K562 (cell line): ENCODE measurements at regions of chr3 and their contacts with region 1.

Region 1: DNA sequence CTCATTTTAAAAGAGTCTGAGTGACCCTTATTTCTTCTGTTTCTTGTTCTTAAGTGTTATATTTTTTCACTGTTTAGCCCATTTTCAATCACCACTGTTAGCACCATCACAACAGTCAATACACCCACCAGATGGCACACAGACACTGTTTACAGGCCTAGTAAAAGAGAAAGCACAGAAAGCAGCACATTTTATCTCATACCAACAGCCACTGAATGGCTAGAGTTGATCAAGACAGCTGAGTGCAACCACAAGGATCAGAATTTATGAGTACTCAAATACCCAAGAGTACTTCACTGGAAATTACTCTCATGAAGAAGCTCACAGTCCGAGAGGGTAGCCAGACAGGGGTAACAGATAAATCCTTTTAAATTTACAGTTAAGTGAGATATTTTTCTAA is 127.0 kb downstream of the TFDP2 start:
- DNase-seq: peak; percentile 35 to 89 (median 56)
- ATAC-seq: peak; percentile 82
- H3K4me3 ChIP-seq: no peak overlapping the region
- H3K27ac ChIP-seq: peak overlapping the region; percentile 45; the same call in 2 of the 3 replicates
- H3K4me1 ChIP-seq: peaks cover 22 to 29% of the 10 kb centered on the region in 2 experiments; a peak in 4 of 5 replicates
- H3K27me3 ChIP-seq: no peaks in the 10 kb centered on the region
- CTCF ChIP-seq: peak; percentile 71 to 83 (median 72); a peak in 5 of 6 replicates
- EP300 ChIP-seq: peak; percentile 91
- POLR2A ChIP-seq: no peak
- RAD21 ChIP-seq: peak; percentile 94

Region 2: GRCh38 chr3:142046320-142047020 is 24.1 kb after region 1 on chr3:
- CTCF ChIA-PET with region 1: no interaction called
- POLR2A ChIA-PET with region 1: interaction called, 12 read pairs
- in situ Hi-C with region 1: no loop called
- intact Hi-C with region 1: loop called (anchors 1 kb)
- DNase-seq: peak; percentile 80 to 94 (median 86)
- ATAC-seq: peak; percentile 98
- H3K4me3 ChIP-seq: peak overlapping the region; percentile 24
- H3K27ac ChIP-seq: peak overlapping the region; percentile 92
- H3K4me1 ChIP-seq: peaks cover 20 to 23% of the 10 kb centered on the region in 2 experiments
- H3K27me3 ChIP-seq: no peaks in the 10 kb centered on the region
- CTCF ChIP-seq: no peak
- EP300 ChIP-seq: peak; percentile 96
- POLR2A ChIP-seq: no peak
- RAD21 ChIP-seq: 0 out of 4 replicates have a peak, but pooled peaks of 1 of the 2 experiments have one; percentile 15

Region 3: DNA sequence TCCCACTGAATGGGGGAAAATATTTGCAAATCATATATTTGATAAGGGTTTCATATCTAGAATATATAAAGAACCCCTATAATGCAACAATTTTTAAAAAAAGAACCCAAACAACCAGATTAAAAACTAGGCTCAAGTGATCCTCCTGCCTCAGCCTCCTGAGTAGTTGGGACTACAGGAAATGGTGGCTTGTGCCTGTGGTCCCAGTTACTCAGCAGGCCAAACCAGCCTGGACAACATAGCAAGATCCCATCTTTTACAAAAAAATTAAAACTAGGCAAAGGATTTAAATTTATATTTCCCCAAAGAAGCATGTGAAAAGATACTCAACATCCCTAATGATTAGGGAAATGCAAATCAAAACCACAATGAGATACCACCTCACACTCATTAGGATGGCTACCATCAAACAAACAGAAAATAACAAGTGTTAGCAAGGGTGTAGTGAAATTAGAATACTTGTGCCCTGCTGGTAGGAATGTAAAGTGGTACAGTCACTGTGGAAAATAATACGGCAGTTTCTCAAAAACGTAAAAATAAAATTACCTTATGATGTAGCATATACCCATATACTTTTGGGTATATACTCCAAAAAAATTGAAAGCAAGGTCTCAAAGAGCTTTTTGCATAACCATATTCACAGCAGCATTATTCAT is 107.3 kb after region 1 on chr3:
- CTCF ChIA-PET with region 1: no interaction called
- POLR2A ChIA-PET with region 1: no interaction called
- in situ Hi-C with region 1: no loop called
- intact Hi-C with region 1: loop called (anchors 1 kb)
- DNase-seq: no peak
- ATAC-seq: no peak
- H3K4me3 ChIP-seq: no peak overlapping the region
- H3K27ac ChIP-seq: no peak overlapping the region
- H3K4me1 ChIP-seq: no peaks in the 10 kb centered on the region
- H3K27me3 ChIP-seq: no peaks in the 10 kb centered on the region
- CTCF ChIP-seq: no peak
- EP300 ChIP-seq: no peak
- POLR2A ChIP-seq: no peak
- RAD21 ChIP-seq: no peak

Region 4: GRCh38 chr3:142159083-142159740 is 136.8 kb after region 1 on chr3:
- CTCF ChIA-PET with region 1: no interaction called
- POLR2A ChIA-PET with region 1: no interaction called
- in situ Hi-C with region 1: no loop called
- intact Hi-C with region 1: no loop called
- DNase-seq: no peak
- ATAC-seq: no peak
- H3K4me3 ChIP-seq: no peak overlapping the region
- H3K27ac ChIP-seq: no peak overlapping the region
- H3K4me1 ChIP-seq: no peaks in the 10 kb centered on the region
- H3K27me3 ChIP-seq: no peaks in the 10 kb centered on the region
- CTCF ChIP-seq: no peak
- EP300 ChIP-seq: no peak
- POLR2A ChIP-seq: no peak
- RAD21 ChIP-seq: no peak

Region 5: GRCh38 chr3:142226484-142226883 is 204.1 kb after region 1 on chr3:
- CTCF ChIA-PET with region 1: no interaction called
- POLR2A ChIA-PET with region 1: no interaction called
- in situ Hi-C with region 1: no loop called
- intact Hi-C with region 1: loop called (anchors 5 kb)
- DNase-seq: peak in 1 of 4 experiments; percentile 22
- ATAC-seq: no peak
- H3K4me3 ChIP-seq: no peak overlapping the region
- H3K27ac ChIP-seq: no peak overlapping the region
- H3K4me1 ChIP-seq: peaks cover 15 to 21% of the 10 kb centered on the region in 2 experiments
- H3K27me3 ChIP-seq: no peaks in the 10 kb centered on the region
- CTCF ChIP-seq: 0 out of 6 replicates have a peak, but pooled peaks of 1 of the 3 experiments have one; percentile 12
- EP300 ChIP-seq: no peak
- POLR2A ChIP-seq: no peak
- RAD21 ChIP-seq: no peak

Region 6: GRCh38 chr3:142270407-142270806 is 248.0 kb after region 1 on chr3:
- CTCF ChIA-PET with region 1: no interaction called
- POLR2A ChIA-PET with region 1: no interaction called
- in situ Hi-C with region 1: no loop called
- intact Hi-C with region 1: loop called (anchors 2 kb)
- DNase-seq: no peak
- ATAC-seq: peak; percentile 71
- H3K4me3 ChIP-seq: no peak overlapping the region
- H3K27ac ChIP-seq: no peak overlapping the region
- H3K4me1 ChIP-seq: peaks cover 0 to 6% of the 10 kb centered on the region in 2 experiments; a peak in 1 of 5 replicates
- H3K27me3 ChIP-seq: no peaks in the 10 kb centered on the region
- CTCF ChIP-seq: peak in 1 of 3 experiments; percentile 19; a peak in 1 of 6 replicates
- EP300 ChIP-seq: no peak
- POLR2A ChIP-seq: no peak
- RAD21 ChIP-seq: peak in 1 of 2 experiments; percentile 54; a peak in 2 of 4 replicates